ENCODE measurements at regions of chr6 and their contacts with region 1.

Region 1: GRCh38 chr6:118651282-118652050 is at the start of gene CEP85L:
- DNase-seq: peak; percentile 93 to 95 (median 94)
- H3K4me3 ChIP-seq: peak within 1 kb of the TSS; percentile 93
- H3K27ac ChIP-seq: peak within 1 kb of the TSS; percentile 93 to 98
- H3K4me1 ChIP-seq: no peaks in the 10 kb centered on the region
- H3K27me3 ChIP-seq: no peaks in the 10 kb centered on the region
- CTCF ChIP-seq: peak in 2 of 3 donors; percentile 19 to 62
- EP300 ChIP-seq: no peak
- POLR2A ChIP-seq: peak; percentile 86
- total RNA-seq, gene CEP85L: 17.7 to 33.4 (median 26.2) TPM

Region 2: GRCh38 chr6:118709859-118710350 is 58.4 kb after region 1 on chr6:
- intact Hi-C with region 1: loop called in 2 of 4 experiments (anchors 10 kb)
- DNase-seq: no peak
- H3K4me3 ChIP-seq: peak overlapping the region; percentile 37
- H3K27ac ChIP-seq: peak overlapping the region in 1 of 2 donors; percentile 80
- H3K4me1 ChIP-seq: peaks cover 6% of the 10 kb centered on the region
- H3K27me3 ChIP-seq: no peaks in the 10 kb centered on the region
- CTCF ChIP-seq: no peak
- EP300 ChIP-seq: no peak
- POLR2A ChIP-seq: no peak

Region 3: GRCh38 chr6:118776607-118777549 is 125.4 kb after region 1 on chr6:
- intact Hi-C with region 1: loop called in 1 of 4 experiments (anchors 10 kb)
- DNase-seq: peak; percentile 44 to 68 (median 54)
- H3K4me3 ChIP-seq: no peak overlapping the region
- H3K27ac ChIP-seq: no peak overlapping the region
- H3K4me1 ChIP-seq: peaks cover 2% of the 10 kb centered on the region
- H3K27me3 ChIP-seq: no peaks in the 10 kb centered on the region
- CTCF ChIP-seq: peak in 2 of 3 donors; percentile 61 to 67
- EP300 ChIP-seq: no peak
- POLR2A ChIP-seq: no peak

Measured in ovary (tissue), 10 donors.